A673 (cell line): ENCODE measurements at regions of chr5 and their contacts with region 1.

Region 1: GRCh38 chr5:67246108-67246507 is 49.5 kb upstream of the CD180 start:
- DNase-seq: peak; percentile 93
- H3K4me3 ChIP-seq: no peak overlapping the region
- H3K27ac ChIP-seq: peak overlapping the region; percentile 98
- H3K4me1 ChIP-seq: peaks cover 65% of the 10 kb centered on the region
- H3K27me3 ChIP-seq: no peaks in the 10 kb centered on the region
- CTCF ChIP-seq: peak; percentile 83

Region 2: DNA sequence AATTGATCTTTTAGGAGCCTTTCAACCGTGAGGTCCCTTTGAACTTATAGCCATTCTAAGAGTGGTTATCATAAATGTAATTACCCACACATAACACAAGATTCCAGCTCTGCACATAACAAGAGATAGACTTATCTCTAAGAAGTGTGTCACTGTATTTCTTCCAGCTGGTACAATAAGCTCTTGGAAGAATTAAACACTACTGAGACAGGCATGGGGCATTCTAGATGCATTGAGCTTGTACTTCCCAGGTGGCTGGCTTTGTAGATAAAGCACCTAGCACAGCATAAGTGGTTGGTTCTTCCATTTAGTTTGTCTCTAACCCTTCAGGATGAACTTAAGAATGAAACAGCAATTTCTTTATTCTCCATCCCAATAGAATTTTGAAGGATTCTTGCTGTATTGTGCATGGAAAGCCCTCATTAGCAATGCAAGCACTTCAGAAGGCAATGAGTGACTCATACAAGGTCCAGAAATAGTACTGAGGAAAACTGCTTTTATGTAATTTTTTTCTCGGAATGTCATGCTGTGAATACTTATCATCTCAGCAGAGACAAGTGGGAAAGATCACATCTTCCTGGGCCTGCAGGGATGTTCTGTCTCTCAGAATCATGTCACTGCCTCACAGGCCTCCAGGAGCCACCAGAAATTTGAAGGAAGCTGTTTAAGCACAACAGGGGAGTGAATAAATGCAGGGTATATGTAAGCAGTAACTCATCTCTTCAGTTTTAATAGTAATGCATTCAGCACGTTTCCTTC is 41.6 kb after region 1 on chr5:
- CTCF ChIA-PET with region 1: no interaction called
- POLR2A ChIA-PET with region 1: no interaction called
- intact Hi-C with region 1: no loop called
- DNase-seq: peak; percentile 90
- H3K4me3 ChIP-seq: no peak overlapping the region
- H3K27ac ChIP-seq: peak overlapping the region; percentile 26
- H3K4me1 ChIP-seq: peaks cover 26% of the 10 kb centered on the region
- H3K27me3 ChIP-seq: no peaks in the 10 kb centered on the region
- CTCF ChIP-seq: no peak

Region 3: GRCh38 chr5:67301285-67301903 is 55.3 kb after region 1 on chr5:
- CTCF ChIA-PET with region 1: no interaction called
- POLR2A ChIA-PET with region 1: no interaction called
- intact Hi-C with region 1: loop called (anchors 5 kb)
- DNase-seq: peak; percentile 94
- H3K4me3 ChIP-seq: no peak overlapping the region
- H3K27ac ChIP-seq: peak overlapping the region; percentile 83
- H3K4me1 ChIP-seq: peaks cover 40% of the 10 kb centered on the region
- H3K27me3 ChIP-seq: no peaks in the 10 kb centered on the region
- CTCF ChIP-seq: no peak

Region 4: DNA sequence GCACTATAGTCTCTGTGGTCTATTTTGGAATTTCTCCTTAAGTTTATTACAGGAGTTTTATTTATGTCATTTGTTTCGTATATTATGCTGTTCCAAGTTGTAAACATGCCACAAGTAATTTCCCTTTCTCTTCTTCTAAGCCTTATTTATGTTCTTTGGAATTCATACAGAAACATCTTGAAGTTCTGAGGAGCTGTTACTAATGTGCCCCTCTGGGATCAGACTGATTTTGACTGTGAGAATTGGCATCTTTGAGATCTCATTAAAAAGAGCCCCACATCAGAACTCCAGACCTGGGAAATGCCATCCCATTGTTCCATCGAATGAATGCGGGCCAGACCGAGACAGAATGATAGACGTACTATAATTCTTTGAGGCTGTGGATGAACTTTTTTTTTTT is 89.3 kb after region 1 on chr5:
- CTCF ChIA-PET with region 1: interaction called, 4 read pairs
- POLR2A ChIA-PET with region 1: interaction called, 4 read pairs
- intact Hi-C with region 1: loop called (anchors 1 kb)
- DNase-seq: peak; percentile 60
- H3K4me3 ChIP-seq: no peak overlapping the region
- H3K27ac ChIP-seq: no peak overlapping the region
- H3K4me1 ChIP-seq: peaks cover 32% of the 10 kb centered on the region
- H3K27me3 ChIP-seq: no peaks in the 10 kb centered on the region
- CTCF ChIP-seq: no peak

Region 5: GRCh38 chr5:67451640-67452279 is 205.7 kb after region 1 on chr5:
- CTCF ChIA-PET with region 1: interaction called, 8 read pairs
- POLR2A ChIA-PET with region 1: no interaction called
- intact Hi-C with region 1: loop called (anchors 1 kb)
- DNase-seq: no peak
- H3K4me3 ChIP-seq: no peak overlapping the region
- H3K27ac ChIP-seq: peak overlapping the region; percentile 64
- H3K4me1 ChIP-seq: peaks cover 52% of the 10 kb centered on the region
- H3K27me3 ChIP-seq: no peaks in the 10 kb centered on the region
- CTCF ChIP-seq: no peak

Region 6: DNA sequence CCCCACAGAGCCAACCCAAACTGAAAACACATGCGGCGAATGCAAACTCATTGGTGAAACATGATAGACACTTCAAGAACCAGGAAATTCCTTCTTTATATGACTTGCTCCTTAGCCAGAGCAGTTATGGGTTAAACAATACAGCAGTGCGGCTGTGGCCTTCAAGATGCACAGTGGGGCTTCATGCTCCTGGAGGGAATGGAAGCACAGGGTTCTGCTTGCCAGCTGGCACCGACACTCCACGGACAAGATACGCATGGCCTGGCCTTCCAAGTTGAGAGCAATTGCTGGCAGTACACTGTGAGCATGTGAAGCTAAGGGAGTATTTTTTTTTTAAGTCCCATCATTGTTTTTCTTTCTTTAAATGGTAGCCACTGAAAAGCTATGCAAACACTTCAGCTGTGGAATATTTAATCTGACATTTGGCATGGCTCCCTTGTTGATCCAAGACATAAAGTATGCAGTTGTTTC is 402.1 kb after region 1 on chr5:
- CTCF ChIA-PET with region 1: no interaction called
- POLR2A ChIA-PET with region 1: no interaction called
- intact Hi-C with region 1: loop called (anchors 5 kb)
- DNase-seq: peak; percentile 91
- H3K4me3 ChIP-seq: no peak overlapping the region
- H3K27ac ChIP-seq: no peak overlapping the region
- H3K4me1 ChIP-seq: peaks cover 30% of the 10 kb centered on the region
- H3K27me3 ChIP-seq: no peaks in the 10 kb centered on the region
- CTCF ChIP-seq: no peak

Region 7: DNA sequence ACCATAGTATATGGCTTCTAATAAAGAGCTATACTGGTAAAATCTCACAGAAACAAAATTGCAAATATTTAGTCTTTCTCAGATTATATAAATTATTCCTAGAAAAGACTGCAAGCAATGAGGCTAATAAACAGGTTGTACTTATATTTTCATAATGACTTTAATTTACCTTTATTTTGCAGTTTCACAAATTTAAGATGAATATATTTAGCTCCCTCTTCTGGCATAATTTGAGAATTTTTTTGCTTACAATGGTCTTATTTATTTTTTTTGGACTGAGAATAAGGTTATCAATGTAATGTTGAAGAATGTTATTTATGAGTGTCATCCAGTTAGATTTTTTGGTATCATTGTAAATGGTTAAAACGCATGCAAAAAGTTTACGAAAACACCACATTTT is 1026.2 kb after region 1 on chr5:
- CTCF ChIA-PET with region 1: no interaction called
- POLR2A ChIA-PET with region 1: no interaction called
- intact Hi-C with region 1: loop called (anchors 5 kb)
- DNase-seq: peak; percentile 54
- H3K4me3 ChIP-seq: no peak overlapping the region
- H3K27ac ChIP-seq: no peak overlapping the region
- H3K4me1 ChIP-seq: peaks cover 67% of the 10 kb centered on the region
- H3K27me3 ChIP-seq: no peaks in the 10 kb centered on the region
- CTCF ChIP-seq: peak; percentile 62